Right ventricle myocardium superior (tissue), 1 donor: ENCODE measurements at regions of chr17 and their contacts with region 1.

Region 1: GRCh38 chr17:7561028-7561575 is 617 bp upstream of the SENP3 start:
- DNase-seq: peak; percentile 94
- ATAC-seq: peak; percentile 82

Region 2: DNA sequence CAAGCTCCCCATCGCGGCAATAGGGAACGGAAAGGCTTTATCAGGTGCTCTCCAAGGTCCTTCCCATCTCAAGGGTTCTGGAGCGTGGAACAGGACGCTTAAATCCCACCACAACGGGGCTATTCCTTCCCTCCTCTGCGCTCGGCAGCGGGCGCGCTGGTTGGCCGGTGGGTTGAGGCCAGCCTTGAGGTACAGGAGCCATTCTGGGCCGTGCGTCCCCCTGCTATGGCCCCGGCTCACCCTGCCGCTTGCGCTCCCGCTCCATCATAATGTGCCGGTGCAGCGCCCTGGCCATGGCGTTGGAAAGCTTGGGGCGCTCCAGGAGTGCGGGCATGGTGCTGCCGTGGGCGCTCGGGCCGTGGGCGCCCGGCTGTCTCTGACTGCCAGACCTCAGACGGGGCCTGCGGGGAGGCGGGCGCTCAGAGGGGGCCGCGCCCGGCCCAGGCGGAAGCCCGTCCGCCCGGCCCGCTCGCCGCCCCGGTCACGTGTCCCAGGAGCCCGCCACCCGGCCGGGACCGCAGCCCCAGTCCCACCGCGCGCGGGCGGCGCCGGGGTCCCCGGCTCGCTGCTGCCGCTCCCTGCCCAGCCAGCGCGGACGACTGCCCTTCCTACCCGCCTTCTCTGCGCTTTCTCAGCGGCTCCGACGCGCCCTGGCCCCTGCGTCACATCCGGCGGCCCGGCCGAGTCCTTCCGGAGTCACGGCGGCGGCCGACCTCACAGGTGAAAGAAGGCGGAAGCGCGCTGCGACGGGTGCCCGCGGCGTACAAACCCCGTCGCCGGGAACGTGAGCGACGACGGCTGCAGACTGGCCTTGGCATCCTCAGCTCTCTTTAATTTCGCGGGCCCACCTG is 246.2 kb before region 1 on chr17 and contains the start of gene GPS2:
- intact Hi-C with region 1: loop called (anchors 5 kb)
- DNase-seq: peak; percentile 97
- ATAC-seq: peak; percentile 92
- total RNA-seq, gene GPS2: 68.8 TPM

Region 3: DNA sequence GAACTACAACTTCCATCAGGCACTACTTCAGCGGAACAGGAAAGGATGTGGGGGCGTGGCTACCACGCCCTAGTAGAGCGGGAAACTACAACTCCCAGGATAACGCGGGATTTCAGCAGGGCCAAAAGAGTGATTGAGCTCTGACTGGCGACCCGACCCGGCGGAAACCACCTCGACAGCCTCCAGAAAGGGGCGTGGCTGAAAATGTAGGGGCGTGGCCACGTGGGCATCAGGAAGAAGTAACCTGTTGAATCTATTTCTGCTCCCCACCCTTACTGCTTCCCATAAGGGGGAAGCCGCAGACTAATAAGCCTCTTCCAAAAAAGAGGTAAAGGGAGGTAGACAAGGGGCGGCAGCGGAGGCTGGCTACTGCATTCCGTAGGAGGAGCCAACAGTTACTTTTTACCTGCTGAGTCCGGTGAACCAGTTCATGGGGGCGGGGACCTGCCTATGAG is 125.9 kb before region 1 on chr17 and contains the start of gene TMEM102:
- intact Hi-C with region 1: loop called (anchors 2 kb)
- DNase-seq: peak; percentile 96
- ATAC-seq: peak; percentile 84
- total RNA-seq, gene TMEM102: 1.7 TPM

Region 4: GRCh38 chr17:7513850-7514419 is 47.2 kb before region 1 on chr17:
- intact Hi-C with region 1: loop called (anchors 5 kb)
- DNase-seq: no peak
- ATAC-seq: peak; percentile 21